Caco-2 (cell line): ENCODE measurements at regions of chr12 and their contacts with region 1.

Region 1: DNA sequence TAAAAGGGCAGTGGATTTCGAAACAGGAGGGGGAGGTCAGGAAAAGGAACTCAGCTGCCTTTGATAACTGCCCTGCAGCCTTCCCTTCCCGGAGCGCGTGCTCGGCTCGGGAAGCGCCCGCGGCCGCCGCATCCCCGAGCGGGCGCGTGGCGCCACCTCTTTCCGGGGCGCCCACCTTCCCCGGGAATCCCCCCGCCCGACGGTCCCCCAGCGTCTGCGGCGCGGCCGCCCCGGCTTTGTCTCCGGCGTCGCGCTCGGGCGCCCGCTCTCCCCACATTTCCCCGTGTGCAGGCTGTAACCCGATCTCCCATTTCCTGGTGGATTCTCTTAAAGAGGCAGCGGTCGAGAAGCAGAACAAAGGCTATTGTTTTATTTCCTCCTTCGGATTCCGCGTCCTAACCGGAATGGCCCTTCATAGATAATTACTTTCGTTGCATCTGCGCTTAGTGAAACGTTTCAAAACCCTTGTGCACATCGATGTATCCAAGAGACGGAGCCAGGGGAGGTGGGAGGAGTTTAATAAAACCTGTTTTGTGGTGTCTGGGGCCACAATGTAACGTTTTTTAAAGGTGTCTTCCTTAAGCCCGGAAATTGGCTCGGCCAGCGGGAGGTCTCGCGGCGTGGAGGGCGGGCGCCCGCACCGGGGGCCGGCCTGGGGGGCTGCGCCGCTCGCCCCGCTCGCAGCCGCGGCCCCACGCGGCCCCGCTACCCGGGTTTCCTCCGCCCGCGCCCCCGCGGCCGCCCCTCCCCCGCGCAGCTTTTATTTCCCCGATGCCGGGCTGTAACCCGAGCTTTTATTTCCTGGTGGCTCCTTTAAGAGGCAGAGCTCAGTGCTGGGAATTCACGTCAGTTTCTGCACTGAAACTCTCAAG is at the start of gene ETV6:
- DNase-seq: peak; percentile 78 to 85
- H3K4me3 ChIP-seq: peak within 1 kb of the TSS; percentile 79
- H3K4me3 Mint-ChIP-seq: peak within 1 kb of the TSS; percentile 84
- H3K27ac Mint-ChIP-seq: peak within 1 kb of the TSS; percentile 87
- H3K4me1 ChIP-seq: peaks cover 7% of the 10 kb centered on the region; the same call in 1 of the 2 replicates
- H3K4me1 Mint-ChIP-seq: peaks cover 10% of the 10 kb centered on the region
- H3K27me3 ChIP-seq: no peaks in the 10 kb centered on the region
- H3K27me3 Mint-ChIP-seq: no peaks in the 10 kb centered on the region
- CTCF ChIP-seq: no peak
- total RNA-seq, gene ETV6: 15.6 and 18.2 TPM in 2 replicates

Region 2: GRCh38 chr12:11607313-11608081 is 41.6 kb before region 1 on chr12:
- CTCF ChIA-PET with region 1: no interaction called
- POLR2A ChIA-PET with region 1: no interaction called
- intact Hi-C with region 1: loop called (anchors 1 kb)
- DNase-seq: peak; percentile 85 to 86
- H3K4me3 ChIP-seq: no peak overlapping the region
- H3K4me3 Mint-ChIP-seq: peak overlapping the region; percentile 56
- H3K27ac Mint-ChIP-seq: peak overlapping the region; percentile 3
- H3K4me1 ChIP-seq: peaks cover 17% of the 10 kb centered on the region
- H3K4me1 Mint-ChIP-seq: peaks cover 19% of the 10 kb centered on the region
- H3K27me3 ChIP-seq: no peaks in the 10 kb centered on the region
- H3K27me3 Mint-ChIP-seq: no peaks in the 10 kb centered on the region
- CTCF ChIP-seq: no peak

Region 3: GRCh38 chr12:11891754-11892386 is 242.8 kb after region 1 on chr12:
- CTCF ChIA-PET with region 1: no interaction called
- POLR2A ChIA-PET with region 1: interaction called, 7 read pairs
- intact Hi-C with region 1: loop called (anchors 5 kb)
- DNase-seq: no peak
- H3K4me3 ChIP-seq: no peak overlapping the region
- H3K4me3 Mint-ChIP-seq: no peak overlapping the region
- H3K27ac Mint-ChIP-seq: no peak overlapping the region
- H3K4me1 ChIP-seq: peaks cover 5% of the 10 kb centered on the region
- H3K4me1 Mint-ChIP-seq: peaks cover 3% of the 10 kb centered on the region
- H3K27me3 ChIP-seq: no peaks in the 10 kb centered on the region
- H3K27me3 Mint-ChIP-seq: no peaks in the 10 kb centered on the region
- CTCF ChIP-seq: peak; percentile 49 to 66